ENCODE measurements at regions of chr7 and their contacts with region 1.

Region 1: DNA sequence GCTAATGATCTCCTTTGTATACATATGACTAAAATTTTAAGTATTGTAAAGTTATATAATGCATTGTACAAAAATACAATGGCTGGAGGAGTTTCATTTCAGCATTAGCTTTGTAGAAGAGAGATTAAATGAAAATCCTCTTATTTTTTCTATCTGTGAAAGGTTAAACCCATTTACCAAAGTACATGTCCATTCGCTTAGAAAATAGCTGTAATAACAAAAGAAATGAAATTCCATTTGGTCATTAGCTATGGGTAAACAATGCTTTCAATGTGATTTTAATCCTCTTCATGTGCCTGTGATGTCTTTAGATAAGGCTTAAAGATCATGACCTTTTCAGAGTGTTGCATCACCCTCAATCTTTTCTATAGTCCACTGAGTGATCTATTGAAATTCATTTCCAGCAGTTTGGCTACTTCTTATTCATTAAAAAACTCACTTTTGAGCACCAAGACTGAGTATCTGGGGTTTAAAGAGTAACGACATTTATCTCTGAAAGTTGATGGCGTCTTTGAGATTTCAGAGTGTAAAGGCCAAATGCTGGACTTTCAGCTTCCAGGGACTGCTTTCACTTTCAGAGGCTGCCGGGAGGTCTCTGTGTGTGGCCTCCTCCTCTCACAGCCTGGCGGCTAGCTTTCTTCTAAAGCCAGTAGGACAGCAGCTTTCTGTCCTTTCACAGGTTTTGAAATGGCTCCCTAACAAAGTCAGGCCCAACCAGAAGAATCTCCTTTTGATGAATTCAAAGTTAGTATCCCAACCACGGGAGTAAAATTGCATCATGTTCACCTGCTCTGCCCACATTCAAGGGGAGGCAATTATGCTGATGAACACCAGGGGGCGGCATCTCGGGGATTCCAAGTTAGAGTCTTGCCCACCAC is 701.4 kb upstream of the COBL start:
- DNase-seq: peak in 1 of 3 donors; percentile 35
- ATAC-seq: no peak
- H3K4me3 ChIP-seq: no peak overlapping the region
- H3K27ac ChIP-seq: no peak overlapping the region
- H3K4me1 ChIP-seq: no peaks in the 10 kb centered on the region
- H3K27me3 ChIP-seq: no peaks in the 10 kb centered on the region

Region 2: DNA sequence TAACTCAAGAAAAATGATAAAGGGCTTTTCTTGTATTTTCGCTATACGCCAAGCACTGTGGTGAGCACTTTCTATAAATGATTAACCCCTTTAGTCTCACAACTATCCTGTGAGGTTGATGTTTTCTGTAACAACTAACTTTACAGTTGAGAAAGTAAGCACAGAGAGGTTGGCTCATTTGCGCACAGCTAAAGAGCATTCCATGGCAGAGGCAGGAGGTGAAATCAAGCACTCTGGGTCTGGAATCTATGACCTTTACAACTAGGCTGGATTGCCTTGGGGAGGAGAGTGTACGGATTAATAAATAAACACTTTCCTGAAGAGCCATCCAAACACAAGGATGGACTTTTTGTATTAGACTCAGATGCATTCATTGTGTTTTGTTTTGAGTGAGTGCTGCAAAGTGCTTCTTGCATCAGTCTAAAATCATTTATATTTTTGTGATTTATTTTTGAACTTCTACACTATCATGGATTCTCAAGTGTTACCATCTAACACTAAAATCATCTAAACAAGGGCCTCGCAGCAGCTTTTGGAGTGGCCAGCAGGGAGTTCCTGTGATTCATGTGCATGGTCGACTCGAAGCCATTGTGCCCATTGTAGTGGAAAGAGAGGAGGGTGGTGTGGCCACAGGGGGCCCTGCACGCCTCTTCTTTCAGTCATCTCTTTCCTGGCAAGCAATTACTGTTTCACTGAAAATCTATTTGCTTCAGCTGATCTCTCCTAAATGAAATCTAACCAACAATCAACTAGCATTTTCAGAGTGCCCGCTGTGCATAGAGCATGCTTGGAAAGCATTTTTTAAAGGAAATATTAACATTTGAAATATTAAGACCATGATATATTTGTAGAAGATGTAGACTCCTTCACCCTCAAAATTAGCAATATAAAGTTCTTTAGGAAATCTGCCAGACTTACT is 68.1 kb before region 1 on chr7:
- intact Hi-C with region 1: loop called in 1 of 4 experiments (anchors 10 kb)
- DNase-seq: no peak
- ATAC-seq: no peak
- H3K4me3 ChIP-seq: no peak overlapping the region
- H3K27ac ChIP-seq: no peak overlapping the region
- H3K4me1 ChIP-seq: no peaks in the 10 kb centered on the region
- H3K27me3 ChIP-seq: no peaks in the 10 kb centered on the region

Region 3: GRCh38 chr7:52302765-52303520 is 284.9 kb after region 1 on chr7:
- intact Hi-C with region 1: no loop called
- DNase-seq: peak in 1 of 3 donors; percentile 40
- ATAC-seq: no peak
- H3K4me3 ChIP-seq: no peak overlapping the region
- H3K27ac ChIP-seq: no peak overlapping the region
- H3K4me1 ChIP-seq: no peaks in the 10 kb centered on the region
- H3K27me3 ChIP-seq: no peaks in the 10 kb centered on the region